Activated CD8-positive, alpha-beta T cell treated with anti-CD3 and anti-CD28 coated beads for 36 hours (primary cell): ENCODE measurements at regions of chr9 and their contacts with region 1.

Region 1: GRCh38 chr9:93134015-93134739 is at the start of gene NINJ1:
- DNase-seq: peak; percentile 95
- ATAC-seq: peak; percentile 79
- H3K4me3 Mint-ChIP-seq: peak within 1 kb of the TSS; percentile 91
- H3K27ac Mint-ChIP-seq: peak within 1 kb of the TSS; percentile 93
- H3K4me1 Mint-ChIP-seq: peaks cover 59% of the 10 kb centered on the region
- H3K27me3 Mint-ChIP-seq: no peaks in the 10 kb centered on the region
- CTCF ChIP-seq: no peak
- total RNA-seq, gene NINJ1: 118 to 120 TPM

Region 2: GRCh38 chr9:93013856-93014582 is 120.2 kb before region 1 on chr9:
- CTCF ChIA-PET with region 1: no interaction called
- POLR2A ChIA-PET with region 1: no interaction called
- intact Hi-C with region 1: no loop called
- DNase-seq: no peak
- ATAC-seq: no peak
- H3K4me3 Mint-ChIP-seq: no peak overlapping the region
- H3K27ac Mint-ChIP-seq: no peak overlapping the region
- H3K4me1 Mint-ChIP-seq: peaks cover 6% of the 10 kb centered on the region
- H3K27me3 Mint-ChIP-seq: no peaks in the 10 kb centered on the region
- CTCF ChIP-seq: no peak

Region 3: GRCh38 chr9:93095205-93096130 is 38.7 kb before region 1 on chr9:
- CTCF ChIA-PET with region 1: interaction called, 3 read pairs
- POLR2A ChIA-PET with region 1: interaction called, 6 read pairs
- intact Hi-C with region 1: loop called (anchors 5 kb)
- DNase-seq: peak; percentile 100
- ATAC-seq: peak; percentile 82
- H3K4me3 Mint-ChIP-seq: peak overlapping the region; percentile 86
- H3K27ac Mint-ChIP-seq: peak overlapping the region; percentile 97
- H3K4me1 Mint-ChIP-seq: peaks cover 67% of the 10 kb centered on the region
- H3K27me3 Mint-ChIP-seq: no peaks in the 10 kb centered on the region
- CTCF ChIP-seq: no peak

Region 4: GRCh38 chr9:93205045-93205768 is 71.0 kb after region 1 on chr9:
- CTCF ChIA-PET with region 1: no interaction called
- POLR2A ChIA-PET with region 1: no interaction called
- intact Hi-C with region 1: no loop called
- DNase-seq: peak; percentile 15
- ATAC-seq: peak; percentile 65
- H3K4me3 Mint-ChIP-seq: no peak overlapping the region
- H3K27ac Mint-ChIP-seq: no peak overlapping the region
- H3K4me1 Mint-ChIP-seq: peaks cover 4% of the 10 kb centered on the region
- H3K27me3 Mint-ChIP-seq: no peaks in the 10 kb centered on the region
- CTCF ChIP-seq: no peak